Activated CD4-positive, alpha-beta memory T cell treated with anti-CD3 and anti-CD28 coated beads for 36 hours (primary cell): ENCODE measurements at regions of chr5 and their contacts with region 1.

Region 1: GRCh38 chr5:138035605-138036537 is 3.0 kb upstream of the FAM13B start:
- DNase-seq: peak; percentile 72
- H3K4me3 Mint-ChIP-seq: peak overlapping the region; percentile 9
- H3K27ac Mint-ChIP-seq: no peak overlapping the region
- H3K4me1 Mint-ChIP-seq: peaks cover 31% of the 10 kb centered on the region
- H3K27me3 Mint-ChIP-seq: no peaks in the 10 kb centered on the region

Region 2: GRCh38 chr5:137684761-137685160 is 351.1 kb before region 1 on chr5:
- CTCF ChIA-PET with region 1: no interaction called
- POLR2A ChIA-PET with region 1: no interaction called
- intact Hi-C with region 1: no loop called
- DNase-seq: no peak
- H3K4me3 Mint-ChIP-seq: no peak overlapping the region
- H3K27ac Mint-ChIP-seq: no peak overlapping the region
- H3K4me1 Mint-ChIP-seq: no peaks in the 10 kb centered on the region
- H3K27me3 Mint-ChIP-seq: no peaks in the 10 kb centered on the region

Region 3: DNA sequence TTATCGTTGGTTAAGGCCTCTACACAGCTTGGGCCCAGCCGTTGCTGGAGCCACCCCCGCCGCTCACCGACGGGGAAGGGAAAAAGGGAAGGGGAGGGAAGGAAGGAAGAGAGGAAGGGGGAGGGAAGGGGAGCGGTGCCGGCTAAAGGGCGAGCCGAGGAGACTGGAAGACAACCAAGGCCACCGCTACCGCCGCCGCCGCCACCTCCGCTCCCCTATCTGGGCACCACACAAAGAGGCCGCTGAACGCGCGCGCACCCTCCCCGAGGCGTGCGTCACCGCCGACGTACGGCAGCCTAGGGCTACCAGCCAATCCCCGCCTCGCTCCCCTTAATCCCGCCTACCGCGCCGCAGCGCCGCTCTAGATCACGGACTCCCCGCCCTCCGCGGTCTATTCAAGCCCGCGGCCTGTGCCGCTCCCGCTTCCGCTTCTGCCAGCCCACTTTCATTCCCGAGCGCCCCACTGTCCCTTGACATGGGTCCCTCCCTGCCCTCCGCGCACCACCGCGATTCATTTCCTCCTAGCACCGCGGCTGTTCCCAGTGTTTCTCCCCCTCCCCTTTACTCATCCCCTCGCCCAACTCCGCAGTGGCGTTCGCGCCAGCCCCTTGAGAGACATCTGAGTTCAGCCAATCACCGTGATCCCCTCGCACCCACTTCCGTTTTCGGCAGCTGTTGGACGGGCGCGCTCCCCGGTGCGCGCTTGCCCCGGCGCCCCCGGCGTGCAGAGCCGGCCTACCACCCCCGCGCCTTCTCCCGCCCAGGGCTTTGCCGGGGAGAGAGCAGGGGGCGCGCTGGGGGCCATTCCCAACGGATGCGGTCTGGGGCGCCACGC is 281.5 kb before region 1 on chr5 and contains the start of gene HNRNPA0:
- CTCF ChIA-PET with region 1: no interaction called
- POLR2A ChIA-PET with region 1: interaction called, 4 read pairs
- intact Hi-C with region 1: loop called (anchors 1 kb)
- DNase-seq: peak; percentile 97
- H3K4me3 Mint-ChIP-seq: peak within 1 kb of the TSS; percentile 93
- H3K27ac Mint-ChIP-seq: peak within 1 kb of the TSS; percentile 100
- H3K4me1 Mint-ChIP-seq: peaks cover 32% of the 10 kb centered on the region
- H3K27me3 Mint-ChIP-seq: peaks cover 3% of the 10 kb centered on the region
- total RNA-seq, gene HNRNPA0: 29.2 to 29.6 TPM

Region 4: GRCh38 chr5:137888857-137889759 is 146.8 kb before region 1 on chr5 and contains the start of gene PKD2L2:
- CTCF ChIA-PET with region 1: no interaction called
- POLR2A ChIA-PET with region 1: no interaction called
- intact Hi-C with region 1: loop called (anchors 5 kb)
- DNase-seq: peak; percentile 89
- H3K4me3 Mint-ChIP-seq: peak within 1 kb of the TSS; percentile 87
- H3K27ac Mint-ChIP-seq: peak within 1 kb of the TSS; percentile 89
- H3K4me1 Mint-ChIP-seq: peaks cover 19% of the 10 kb centered on the region
- H3K27me3 Mint-ChIP-seq: no peaks in the 10 kb centered on the region
- total RNA-seq, gene PKD2L2: not detected

Region 5: DNA sequence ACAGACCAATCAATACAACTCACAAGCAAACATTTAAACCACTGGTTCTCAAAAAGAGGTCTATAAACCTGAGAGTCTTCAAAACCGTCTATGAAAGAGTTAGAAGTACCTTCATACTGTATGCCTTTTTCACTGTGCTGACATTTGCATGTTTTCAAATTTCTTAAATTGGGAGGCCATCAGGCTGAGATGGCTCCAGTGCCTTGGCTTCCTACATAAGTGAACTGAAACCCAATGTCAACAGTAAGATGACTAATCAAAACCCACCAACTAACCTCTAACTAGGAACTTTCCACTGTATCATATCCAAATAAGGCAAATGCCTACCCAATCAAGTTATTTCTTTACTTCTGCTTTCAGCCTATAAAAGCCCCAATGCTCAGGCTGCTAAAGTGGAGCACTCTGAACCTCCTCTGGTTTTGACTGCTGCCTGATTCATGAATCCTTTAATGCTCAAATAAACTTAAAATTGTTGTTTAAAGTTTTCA is 38.1 kb before region 1 on chr5:
- CTCF ChIA-PET with region 1: no interaction called
- POLR2A ChIA-PET with region 1: no interaction called
- intact Hi-C with region 1: loop called (anchors 5 kb)
- DNase-seq: peak; percentile 41
- H3K4me3 Mint-ChIP-seq: no peak overlapping the region
- H3K27ac Mint-ChIP-seq: peak overlapping the region; percentile 74
- H3K4me1 Mint-ChIP-seq: peaks cover 52% of the 10 kb centered on the region
- H3K27me3 Mint-ChIP-seq: no peaks in the 10 kb centered on the region

Region 6: GRCh38 chr5:138065102-138065501 is 29.2 kb after region 1 on chr5:
- CTCF ChIA-PET with region 1: interaction called, 205 read pairs
- POLR2A ChIA-PET with region 1: interaction called, 5 read pairs
- intact Hi-C with region 1: loop called (anchors 1 kb)
- DNase-seq: peak; percentile 15
- H3K4me3 Mint-ChIP-seq: no peak overlapping the region
- H3K27ac Mint-ChIP-seq: no peak overlapping the region
- H3K4me1 Mint-ChIP-seq: peaks cover 4% of the 10 kb centered on the region
- H3K27me3 Mint-ChIP-seq: no peaks in the 10 kb centered on the region

Region 7: GRCh38 chr5:138128334-138128733 is 92.5 kb after region 1 on chr5:
- CTCF ChIA-PET with region 1: interaction called, 30 read pairs
- POLR2A ChIA-PET with region 1: no interaction called
- intact Hi-C with region 1: loop called (anchors 1 kb)
- DNase-seq: no peak
- H3K4me3 Mint-ChIP-seq: no peak overlapping the region
- H3K27ac Mint-ChIP-seq: no peak overlapping the region
- H3K4me1 Mint-ChIP-seq: peaks cover 2% of the 10 kb centered on the region
- H3K27me3 Mint-ChIP-seq: peaks cover 3% of the 10 kb centered on the region

Region 8: GRCh38 chr5:138352071-138352721 is 316.3 kb after region 1 on chr5 and contains the start of gene KDM3B:
- CTCF ChIA-PET with region 1: interaction called, 6 read pairs
- POLR2A ChIA-PET with region 1: no interaction called
- intact Hi-C with region 1: loop called (anchors 10 kb)
- DNase-seq: peak; percentile 95
- H3K4me3 Mint-ChIP-seq: peak within 1 kb of the TSS; percentile 91
- H3K27ac Mint-ChIP-seq: peak within 1 kb of the TSS; percentile 91
- H3K4me1 Mint-ChIP-seq: peaks cover 30% of the 10 kb centered on the region
- H3K27me3 Mint-ChIP-seq: no peaks in the 10 kb centered on the region
- total RNA-seq, gene KDM3B: 38.6 to 39.6 TPM